MCF 10A (cell line): ENCODE measurements at regions of chr1 and their contacts with region 1.

Region 1: DNA sequence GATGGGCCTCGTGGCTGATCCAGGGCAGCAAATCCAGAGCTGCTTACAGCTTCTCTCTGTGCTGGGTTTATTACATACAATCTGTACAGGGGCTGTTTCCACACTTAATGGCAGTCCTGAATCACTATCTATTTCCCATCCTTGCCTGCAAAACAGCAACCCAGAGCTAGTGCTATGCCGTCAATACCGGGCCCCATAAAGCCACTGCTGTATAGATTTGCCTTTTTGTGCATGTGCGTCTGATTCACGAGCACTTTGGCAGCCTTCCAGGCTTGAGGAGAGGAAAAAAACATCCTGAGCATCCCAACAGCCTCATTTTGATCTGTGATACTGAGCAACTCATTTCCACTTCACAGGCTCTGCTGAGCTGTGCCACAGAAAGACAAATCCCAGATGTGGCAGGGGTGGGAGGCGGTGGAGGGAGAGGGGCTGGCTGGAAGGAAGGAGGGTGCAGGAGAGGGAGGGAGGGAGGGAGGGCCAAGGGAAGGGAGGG is 65.2 kb upstream of the TARBP1 start:
- DNase-seq: peak; percentile 96
- H3K4me3 Mint-ChIP-seq: no peak overlapping the region
- H3K27ac Mint-ChIP-seq: peak overlapping the region; percentile 80
- H3K4me1 Mint-ChIP-seq: peaks cover 36% of the 10 kb centered on the region
- H3K27me3 Mint-ChIP-seq: no peaks in the 10 kb centered on the region
- CTCF ChIP-seq: no peak

Region 2: GRCh38 chr1:233183226-233184020 is 1360.7 kb before region 1 on chr1:
- CTCF ChIA-PET with region 1: no interaction called
- POLR2A ChIA-PET with region 1: no interaction called
- intact Hi-C with region 1: loop called (anchors 10 kb)
- DNase-seq: no peak
- H3K4me3 Mint-ChIP-seq: no peak overlapping the region
- H3K27ac Mint-ChIP-seq: no peak overlapping the region
- H3K4me1 Mint-ChIP-seq: peaks cover 22% of the 10 kb centered on the region
- H3K27me3 Mint-ChIP-seq: no peaks in the 10 kb centered on the region
- CTCF ChIP-seq: no peak

Region 3: DNA sequence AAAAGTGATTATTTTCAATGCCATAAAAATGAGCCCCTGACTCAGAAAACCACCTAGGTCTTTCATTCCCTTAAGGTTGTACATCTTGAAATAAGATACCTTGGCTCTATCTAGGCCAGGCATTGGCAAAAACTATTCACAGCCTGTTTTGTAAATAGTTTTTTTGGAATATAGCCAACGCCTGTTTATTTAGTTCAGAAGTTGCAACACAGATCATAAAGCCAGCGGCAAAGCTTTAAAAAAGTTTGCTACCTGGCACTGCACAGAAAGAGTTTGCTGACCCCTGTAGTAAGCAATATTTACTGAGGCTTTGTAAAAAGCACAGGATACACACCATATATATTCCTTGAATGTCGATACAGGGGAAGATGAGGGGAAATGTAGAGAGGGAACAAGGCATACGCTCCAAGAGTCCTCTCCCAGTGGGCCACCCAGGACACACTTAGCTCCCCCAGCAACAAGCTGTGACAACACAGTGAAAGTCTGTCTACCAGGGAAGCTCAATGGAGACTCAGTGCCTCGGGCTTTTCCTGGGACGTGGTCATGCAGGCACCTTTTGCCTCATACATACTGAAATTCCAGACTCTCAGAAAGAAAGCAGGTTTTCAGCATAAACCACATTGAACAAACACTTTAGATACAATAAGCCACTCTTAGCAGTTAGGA is 85.6 kb before region 1 on chr1:
- CTCF ChIA-PET with region 1: no interaction called
- POLR2A ChIA-PET with region 1: no interaction called
- intact Hi-C with region 1: no loop called
- DNase-seq: peak; percentile 49
- H3K4me3 Mint-ChIP-seq: no peak overlapping the region
- H3K27ac Mint-ChIP-seq: peak overlapping the region; percentile 28
- H3K4me1 Mint-ChIP-seq: no peaks in the 10 kb centered on the region
- H3K27me3 Mint-ChIP-seq: no peaks in the 10 kb centered on the region
- CTCF ChIP-seq: no peak

Region 4: DNA sequence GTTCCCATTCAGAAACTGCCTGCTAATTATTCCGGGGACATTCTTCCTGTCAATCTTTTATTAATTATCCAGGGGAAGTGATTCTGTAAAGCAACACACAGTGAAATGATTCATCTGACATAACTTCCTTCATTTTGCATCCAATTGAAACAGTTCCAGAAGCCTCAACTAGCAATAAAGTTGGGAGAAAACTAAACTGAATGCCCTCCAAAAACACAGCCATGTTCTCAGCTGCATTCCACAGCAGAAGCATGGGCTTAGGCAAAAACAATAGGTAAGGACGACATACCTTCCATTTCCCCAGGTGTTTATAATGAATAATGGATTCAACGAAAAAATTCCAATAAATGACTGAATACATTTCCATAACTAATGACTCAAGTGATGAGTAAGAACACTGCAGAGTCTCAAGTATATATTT is 28.3 kb before region 1 on chr1:
- CTCF ChIA-PET with region 1: interaction called, 4 read pairs
- POLR2A ChIA-PET with region 1: interaction called, 443 read pairs
- intact Hi-C with region 1: loop called (anchors 1 kb)
- DNase-seq: peak; percentile 76
- H3K4me3 Mint-ChIP-seq: no peak overlapping the region
- H3K27ac Mint-ChIP-seq: peak overlapping the region; percentile 80
- H3K4me1 Mint-ChIP-seq: peaks cover 27% of the 10 kb centered on the region
- H3K27me3 Mint-ChIP-seq: no peaks in the 10 kb centered on the region
- CTCF ChIP-seq: no peak